CD8-positive, alpha-beta T cell (primary cell): ENCODE measurements at regions of chr3 and their contacts with region 1.

Region 1: DNA sequence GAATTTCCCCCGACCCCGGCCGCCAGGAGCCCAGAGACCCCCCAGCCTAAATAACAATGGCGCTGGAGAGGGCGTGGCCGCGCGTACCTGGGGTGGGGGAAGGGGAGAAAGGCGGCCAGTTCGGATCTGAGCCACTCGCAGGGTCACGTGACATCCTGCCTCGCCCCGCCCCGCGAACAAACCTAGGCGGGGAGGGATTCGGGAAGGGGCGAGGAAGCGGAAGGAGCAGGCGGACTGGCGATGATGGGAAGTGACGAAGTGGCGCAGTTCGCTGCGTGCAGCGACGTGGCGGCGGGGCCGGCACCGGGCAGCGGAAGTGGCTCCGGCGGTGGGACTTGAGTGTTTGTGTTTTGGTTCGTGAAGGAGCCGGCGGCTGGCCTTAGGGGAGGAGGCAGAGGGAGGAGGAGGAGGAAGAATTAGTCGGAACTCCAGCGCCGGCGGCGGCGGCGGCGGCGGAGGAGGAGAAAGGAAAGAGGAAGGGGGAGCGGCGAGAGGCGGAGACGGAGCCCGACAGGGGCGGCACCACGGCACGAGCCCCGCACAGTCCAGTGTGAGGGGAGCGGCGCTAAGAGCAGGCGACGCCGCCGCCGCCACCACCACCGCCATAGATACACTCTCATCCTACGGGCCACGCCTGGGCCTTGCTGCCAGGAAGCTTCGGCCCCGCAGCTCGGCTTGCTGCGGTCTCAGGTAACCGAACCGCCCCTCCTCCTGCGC is at the start of gene RAB5A:
- DNase-seq: peak; percentile 91 to 99 (median 97)
- ATAC-seq: peak; percentile 74
- H3K4me3 ChIP-seq: peak within 1 kb of the TSS; percentile 95 to 99
- H3K4me3 Mint-ChIP-seq: peak within 1 kb of the TSS; percentile 100
- H3K27ac ChIP-seq: peak within 1 kb of the TSS; percentile 75 to 99
- H3K27ac Mint-ChIP-seq: peak within 1 kb of the TSS; percentile 100
- H3K4me1 ChIP-seq: peaks cover 33% of the 10 kb centered on the region
- H3K4me1 Mint-ChIP-seq: peaks cover 53% of the 10 kb centered on the region
- H3K27me3 ChIP-seq: no peaks in the 10 kb centered on the region
- H3K27me3 Mint-ChIP-seq: no peaks in the 10 kb centered on the region
- CTCF ChIP-seq: no peak
- total RNA-seq, gene RAB5A: 120 to 121 TPM

Region 2: DNA sequence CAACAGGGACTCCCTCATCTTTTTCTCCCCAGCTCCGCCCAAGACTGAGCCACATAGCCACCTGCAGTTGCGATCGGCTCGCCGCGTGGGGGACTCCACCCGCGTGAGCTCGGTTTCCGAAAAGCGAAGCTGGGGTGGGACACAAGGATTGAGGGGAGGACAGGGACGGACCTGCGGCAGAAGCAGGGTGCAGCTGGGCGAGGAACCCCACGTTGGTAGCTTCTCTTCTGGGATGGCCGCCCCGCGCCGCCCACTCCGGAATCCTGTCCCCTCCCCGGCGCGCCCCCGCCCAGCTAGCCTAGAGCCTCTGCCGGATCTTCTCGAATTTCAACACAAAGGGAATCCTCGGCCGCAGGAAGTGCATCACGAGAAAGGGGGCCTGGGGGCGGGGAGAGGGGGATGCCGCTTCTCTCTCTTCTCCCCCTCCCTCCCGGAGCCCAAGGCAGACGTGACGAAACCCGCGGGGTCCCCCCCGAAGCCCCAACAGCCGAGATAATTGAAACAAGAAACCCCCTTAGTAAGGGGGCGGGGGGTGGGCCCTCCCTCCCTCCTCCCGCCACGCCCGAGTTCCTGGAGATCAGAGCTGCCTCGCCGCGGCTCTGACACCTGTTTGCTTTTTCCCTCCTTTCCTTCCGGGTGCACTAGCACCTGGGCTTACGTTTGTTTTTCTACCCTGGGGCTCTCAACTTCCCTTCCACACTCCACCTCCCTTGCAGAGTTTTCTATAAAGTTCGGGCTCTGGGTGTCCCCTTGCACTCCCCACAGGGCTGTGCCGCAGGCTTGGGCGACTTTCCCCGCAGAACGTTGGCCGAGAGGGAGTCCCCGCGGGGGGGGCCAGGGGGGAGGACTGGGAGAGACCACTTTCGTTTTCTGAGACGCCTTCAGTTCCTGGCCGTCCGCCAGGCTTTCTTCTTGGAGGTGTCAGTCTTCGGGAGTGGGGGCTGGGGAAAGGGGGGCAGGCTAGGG is 800.0 kb before region 1 on chr3:
- CTCF ChIA-PET with region 1: no interaction called
- POLR2A ChIA-PET with region 1: no interaction called
- intact Hi-C with region 1: loop called in 1 of 2 experiments (anchors 5 kb)
- DNase-seq: peak; percentile 33 to 87 (median 68)
- ATAC-seq: peak; percentile 72
- H3K4me3 ChIP-seq: peak overlapping the region; percentile 70 to 75
- H3K4me3 Mint-ChIP-seq: peak overlapping the region; percentile 93
- H3K27ac ChIP-seq: peak overlapping the region; percentile 40 to 47
- H3K27ac Mint-ChIP-seq: peak overlapping the region; percentile 88
- H3K4me1 ChIP-seq: peaks cover 21% of the 10 kb centered on the region
- H3K4me1 Mint-ChIP-seq: peaks cover 14% of the 10 kb centered on the region
- H3K27me3 ChIP-seq: peaks cover 0 to 4% of the 10 kb centered on the region in 2 experiments
- H3K27me3 Mint-ChIP-seq: peaks cover 21% of the 10 kb centered on the region
- CTCF ChIP-seq: peak; percentile 54

Region 3: GRCh38 chr3:19931180-19931692 is 15.8 kb before region 1 on chr3:
- CTCF ChIA-PET with region 1: no interaction called
- POLR2A ChIA-PET with region 1: no interaction called
- intact Hi-C with region 1: no loop called
- DNase-seq: peak in 2 of 9 experiments; percentile 14 to 29
- ATAC-seq: no peak
- H3K4me3 ChIP-seq: no peak overlapping the region
- H3K4me3 Mint-ChIP-seq: no peak overlapping the region
- H3K27ac ChIP-seq: no peak overlapping the region
- H3K27ac Mint-ChIP-seq: no peak overlapping the region
- H3K4me1 ChIP-seq: no peaks in the 10 kb centered on the region
- H3K4me1 Mint-ChIP-seq: no peaks in the 10 kb centered on the region
- H3K27me3 ChIP-seq: peaks cover 0 to 5% of the 10 kb centered on the region in 2 experiments
- H3K27me3 Mint-ChIP-seq: peaks cover 24% of the 10 kb centered on the region
- CTCF ChIP-seq: no peak

Region 4: DNA sequence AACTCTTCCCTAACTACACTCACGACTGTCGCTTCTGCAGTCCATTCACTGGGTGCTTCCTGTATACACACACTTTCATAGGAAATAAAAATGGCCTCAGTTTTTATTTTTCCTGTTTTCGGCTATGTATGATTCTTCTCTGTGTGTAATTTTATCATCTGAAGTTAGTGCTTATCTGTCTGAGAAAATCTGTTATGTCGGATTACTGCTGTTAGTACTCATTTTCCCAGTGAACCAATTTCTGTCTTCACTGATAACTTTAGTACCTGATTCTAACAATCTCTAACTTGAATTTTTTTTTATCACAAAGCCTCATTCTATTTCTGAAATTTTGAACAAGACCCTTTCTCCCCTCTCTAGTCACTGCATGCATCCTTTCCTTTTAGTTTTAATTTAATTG is 20.8 kb after region 1 on chr3:
- CTCF ChIA-PET with region 1: no interaction called
- POLR2A ChIA-PET with region 1: no interaction called
- intact Hi-C with region 1: loop called in 1 of 2 experiments (anchors 2 kb)
- DNase-seq: no peak
- ATAC-seq: no peak
- H3K4me3 ChIP-seq: no peak overlapping the region
- H3K4me3 Mint-ChIP-seq: no peak overlapping the region
- H3K27ac ChIP-seq: no peak overlapping the region
- H3K27ac Mint-ChIP-seq: peak overlapping the region; percentile 29
- H3K4me1 ChIP-seq: peaks cover 7% of the 10 kb centered on the region
- H3K4me1 Mint-ChIP-seq: peaks cover 73% of the 10 kb centered on the region
- H3K27me3 ChIP-seq: no peaks in the 10 kb centered on the region
- H3K27me3 Mint-ChIP-seq: no peaks in the 10 kb centered on the region
- CTCF ChIP-seq: no peak

Region 5: GRCh38 chr3:20185701-20186598 is 239.0 kb after region 1 on chr3 and contains the start of gene SGO1:
- CTCF ChIA-PET with region 1: no interaction called
- POLR2A ChIA-PET with region 1: interaction called, 3 read pairs
- intact Hi-C with region 1: loop called (anchors 1 kb)
- DNase-seq: peak; percentile 99 to 100 (median 100)
- ATAC-seq: peak; percentile 89
- H3K4me3 ChIP-seq: peak within 1 kb of the TSS; percentile 64 to 78
- H3K4me3 Mint-ChIP-seq: no peak within 1 kb of the TSS
- H3K27ac ChIP-seq: peak within 1 kb of the TSS; percentile 71 to 94
- H3K27ac Mint-ChIP-seq: no peak within 1 kb of the TSS
- H3K4me1 ChIP-seq: peaks cover 12% of the 10 kb centered on the region
- H3K4me1 Mint-ChIP-seq: no peaks in the 10 kb centered on the region
- H3K27me3 ChIP-seq: no peaks in the 10 kb centered on the region
- H3K27me3 Mint-ChIP-seq: no peaks in the 10 kb centered on the region
- CTCF ChIP-seq: no peak
- total RNA-seq, gene SGO1: 0.33 to 0.71 TPM